ENCODE measurements at regions of chr13 and their contacts with region 1.

Region 1: DNA sequence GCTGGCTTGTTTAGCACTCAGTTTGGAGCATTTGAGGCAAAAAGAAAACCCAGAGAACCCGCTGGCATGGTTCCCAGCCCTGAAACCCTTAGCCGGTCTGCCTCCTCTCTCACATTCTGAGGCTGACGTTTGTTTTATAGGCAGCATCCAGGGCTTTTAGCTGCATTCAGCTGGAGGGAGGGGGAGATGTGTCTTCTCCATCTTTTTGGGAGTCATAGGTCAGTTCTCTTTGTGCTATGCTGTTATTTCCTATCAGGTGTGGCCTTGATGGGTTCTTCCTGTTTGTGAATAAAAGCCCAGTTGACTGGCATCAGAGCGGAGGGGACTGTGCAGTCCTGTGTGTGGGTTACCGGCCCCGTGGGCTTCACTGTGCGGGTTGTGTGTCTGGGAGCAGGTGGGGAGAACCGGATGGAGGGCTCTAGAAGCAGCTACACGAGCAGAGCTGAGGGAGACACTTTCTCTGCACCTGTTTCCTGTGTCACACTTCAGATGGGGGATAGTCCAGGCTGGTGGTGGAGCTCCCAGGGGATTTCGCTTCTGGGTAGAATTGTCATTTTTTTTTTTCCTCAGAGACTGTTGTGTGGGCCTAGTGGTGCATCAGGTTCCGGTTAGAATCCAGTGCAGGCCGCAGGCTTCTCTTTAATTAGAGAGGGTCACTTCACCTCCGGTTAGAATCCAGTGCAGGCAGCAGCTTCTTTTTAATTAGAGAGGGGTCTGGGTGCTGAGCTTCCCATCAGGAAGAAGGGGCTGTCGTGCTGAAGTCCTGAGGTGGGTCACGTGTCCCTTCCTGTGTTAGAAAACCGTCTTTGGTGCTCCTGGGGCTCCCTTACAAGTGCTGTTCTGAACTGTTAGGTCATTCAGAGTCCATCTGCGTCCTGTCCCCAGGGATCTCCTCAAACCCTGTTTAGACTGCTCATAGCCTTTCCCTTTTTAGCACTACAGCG is 69.6 kb downstream of the ARHGEF7 start:
- DNase-seq: no peak
- H3K4me3 ChIP-seq: no peak overlapping the region
- CTCF ChIP-seq: no peak

Region 2: GRCh38 chr13:111066544-111066943 is 118.2 kb before region 1 on chr13:
- in situ Hi-C with region 1: loop called (anchors 10 kb)
- DNase-seq: no peak
- H3K4me3 ChIP-seq: no peak overlapping the region
- CTCF ChIP-seq: no peak